ENCODE measurements at regions of chr15 and their contacts with region 1.

Region 1: DNA sequence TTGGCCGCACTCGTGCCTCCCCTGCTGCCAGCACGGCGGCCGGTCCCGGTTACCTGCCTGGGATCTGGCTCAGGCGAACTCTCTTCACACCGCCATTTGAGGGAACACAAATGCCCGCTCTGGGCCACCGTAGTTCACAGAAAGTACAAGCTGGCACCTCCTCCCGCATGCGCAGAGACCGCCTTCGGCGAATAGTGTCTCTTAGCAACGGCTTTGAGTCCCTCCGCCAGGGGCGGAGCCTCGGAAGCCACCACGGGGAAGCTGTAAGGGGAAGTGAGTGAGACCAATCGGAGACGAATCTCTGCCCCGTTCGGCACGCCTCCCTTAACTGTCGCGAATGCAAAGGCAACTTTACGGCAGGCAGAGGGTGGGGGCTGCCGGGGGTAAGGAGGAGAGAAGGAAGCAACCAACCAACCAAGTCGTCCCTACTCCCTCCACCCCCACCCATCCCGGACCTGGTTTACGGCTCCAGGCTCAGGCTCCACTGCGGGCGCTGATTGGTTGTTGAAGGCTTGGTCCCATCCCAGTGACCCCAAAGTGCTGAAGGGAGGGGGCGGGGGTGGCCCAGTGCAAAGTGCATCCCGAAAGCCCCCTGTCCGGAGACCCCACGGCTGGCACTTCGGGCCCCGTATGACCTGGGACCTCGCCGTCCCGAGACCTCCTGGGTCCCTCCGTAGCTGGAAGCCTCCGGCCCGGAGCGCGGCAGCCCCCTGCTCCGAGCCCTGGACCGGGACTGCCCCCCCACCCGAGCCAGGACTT is at the starts of genes ASB7 and LINS1:
- DNase-seq: peak; percentile 100
- H3K4me3 Mint-ChIP-seq: no peak within 1 kb of the TSS
- H3K27ac Mint-ChIP-seq: no peak within 1 kb of the TSS
- H3K4me1 Mint-ChIP-seq: peaks cover 22% of the 10 kb centered on the region
- H3K27me3 Mint-ChIP-seq: no peaks in the 10 kb centered on the region
- CTCF ChIP-seq: no peak
- total RNA-seq, gene ASB7: 14.3 and 19.2 TPM in 2 replicates
- total RNA-seq, gene LINS1: 13.9 and 15.1 TPM in 2 replicates

Region 2: DNA sequence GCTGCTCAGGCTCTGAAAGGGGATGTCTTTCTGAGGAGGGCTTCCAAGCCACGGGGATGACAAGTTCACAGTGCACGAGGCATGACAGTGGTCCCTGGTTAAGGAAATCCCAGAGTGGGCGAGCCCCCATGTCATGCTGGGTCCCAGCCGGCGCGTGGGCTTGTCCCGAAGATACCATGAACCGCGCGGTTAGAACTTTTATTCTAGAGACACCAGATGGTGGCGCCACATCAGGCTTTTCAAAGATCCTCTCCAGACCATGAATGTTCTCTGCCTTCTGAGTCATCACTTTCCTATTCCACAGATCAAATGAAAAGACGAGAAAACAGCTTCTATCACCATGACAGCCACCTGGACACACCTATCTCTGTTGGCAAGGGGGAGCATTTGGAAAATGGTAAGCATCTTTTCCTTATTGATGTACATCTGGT is 641.2 kb before region 1 on chr15:
- CTCF ChIA-PET with region 1: no interaction called
- POLR2A ChIA-PET with region 1: no interaction called
- intact Hi-C with region 1: loop called (anchors 10 kb)
- DNase-seq: peak; percentile 53
- H3K4me3 Mint-ChIP-seq: no peak overlapping the region
- H3K27ac Mint-ChIP-seq: no peak overlapping the region
- H3K4me1 Mint-ChIP-seq: peaks cover 15% of the 10 kb centered on the region
- H3K27me3 Mint-ChIP-seq: no peaks in the 10 kb centered on the region
- CTCF ChIP-seq: no peak

Region 3: GRCh38 chr15:100349696-100350433 is 252.4 kb before region 1 on chr15:
- CTCF ChIA-PET with region 1: interaction called, 3 read pairs
- POLR2A ChIA-PET with region 1: interaction called, 32 read pairs
- intact Hi-C with region 1: loop called (anchors 1 kb)
- DNase-seq: peak; percentile 93
- H3K4me3 Mint-ChIP-seq: peak overlapping the region; percentile 86
- H3K27ac Mint-ChIP-seq: peak overlapping the region; percentile 94
- H3K4me1 Mint-ChIP-seq: peaks cover 12% of the 10 kb centered on the region
- H3K27me3 Mint-ChIP-seq: no peaks in the 10 kb centered on the region
- CTCF ChIP-seq: peak; percentile 78

Region 4: GRCh38 chr15:100633763-100634075 is 31.5 kb after region 1 on chr15:
- CTCF ChIA-PET with region 1: no interaction called
- POLR2A ChIA-PET with region 1: no interaction called
- intact Hi-C with region 1: no loop called
- DNase-seq: no peak
- H3K4me3 Mint-ChIP-seq: no peak overlapping the region
- H3K27ac Mint-ChIP-seq: peak overlapping the region; percentile 71
- H3K4me1 Mint-ChIP-seq: peaks cover 18% of the 10 kb centered on the region
- H3K27me3 Mint-ChIP-seq: no peaks in the 10 kb centered on the region
- CTCF ChIP-seq: no peak

Region 5: DNA sequence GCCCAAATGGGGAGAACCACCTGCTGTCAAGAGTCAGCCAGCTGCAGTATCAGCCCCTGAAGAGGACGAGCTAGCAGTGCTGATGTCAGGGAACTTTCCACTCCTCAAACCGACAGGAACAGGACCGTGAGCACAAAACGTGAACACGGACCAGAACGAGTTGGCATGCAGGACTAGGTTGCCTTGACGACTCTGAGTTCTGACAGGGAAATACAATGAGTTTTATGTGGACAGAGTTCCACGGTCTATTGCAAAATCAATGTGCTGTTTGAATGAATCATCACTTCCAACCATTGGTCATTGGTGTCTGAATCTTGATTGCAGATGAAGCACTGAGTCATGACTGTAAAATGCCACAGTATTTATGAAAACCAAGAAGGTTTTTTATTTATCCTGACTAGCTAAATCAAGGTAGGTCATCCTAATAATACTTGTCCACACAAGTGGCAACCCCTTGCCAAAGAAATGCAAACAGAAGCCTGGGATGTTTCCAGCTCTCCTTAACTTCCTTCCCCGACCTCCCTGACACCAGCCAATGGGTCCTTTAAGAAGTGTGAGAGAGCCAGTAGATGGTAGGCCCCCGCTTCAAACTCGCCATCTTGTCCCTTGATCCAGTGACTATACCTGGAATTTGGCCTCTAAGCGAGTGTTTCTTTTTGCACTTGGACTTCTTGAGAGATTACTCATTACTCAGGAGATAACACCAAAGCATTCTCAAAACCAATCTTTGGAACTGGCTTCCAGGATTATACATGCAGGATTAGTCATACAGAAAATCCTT is 119.7 kb after region 1 on chr15:
- CTCF ChIA-PET with region 1: no interaction called
- POLR2A ChIA-PET with region 1: interaction called, 4 read pairs
- intact Hi-C with region 1: loop called (anchors 5 kb)
- DNase-seq: peak; percentile 99
- H3K4me3 Mint-ChIP-seq: peak overlapping the region; percentile 66
- H3K27ac Mint-ChIP-seq: peak overlapping the region; percentile 100
- H3K4me1 Mint-ChIP-seq: peaks cover 38% of the 10 kb centered on the region
- H3K27me3 Mint-ChIP-seq: no peaks in the 10 kb centered on the region
- CTCF ChIP-seq: no peak

Region 6: DNA sequence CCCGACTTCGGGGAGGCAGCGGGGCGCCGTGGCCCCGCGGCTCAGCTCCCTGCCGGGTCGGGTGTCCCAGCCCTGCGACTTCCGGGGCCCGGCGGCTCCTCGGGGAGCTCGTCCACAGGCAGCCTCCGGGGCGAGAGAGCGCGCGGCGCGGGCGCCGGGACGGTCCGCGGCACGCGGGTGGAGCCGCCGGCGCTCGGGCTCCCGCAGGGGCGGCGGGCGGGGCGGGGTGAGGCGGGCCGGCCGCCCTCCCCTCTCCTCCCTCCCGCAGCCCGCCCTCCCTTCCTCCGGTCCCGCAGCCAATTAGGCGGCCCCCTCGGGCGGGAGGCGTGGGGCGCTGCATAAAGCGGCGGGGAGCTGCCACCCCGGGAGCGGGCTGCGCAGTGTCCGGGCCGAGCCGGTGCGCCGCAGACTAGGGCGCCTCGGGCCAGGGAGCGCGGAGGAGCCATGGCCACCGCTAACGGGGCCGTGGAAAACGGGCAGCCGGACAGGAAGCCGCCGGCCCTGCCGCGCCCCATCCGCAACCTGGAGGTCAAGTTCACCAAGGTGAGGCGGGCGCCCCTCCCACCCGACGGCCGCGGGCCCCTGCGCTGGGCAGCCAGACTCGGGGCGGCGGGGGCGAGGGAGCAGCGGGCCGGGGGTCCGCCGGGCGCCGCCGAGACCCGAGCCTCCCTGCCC is 277.4 kb after region 1 on chr15 and contains the start of gene ALDH1A3:
- CTCF ChIA-PET with region 1: interaction called, 3 read pairs
- POLR2A ChIA-PET with region 1: interaction called, 11 read pairs
- intact Hi-C with region 1: no loop called
- DNase-seq: peak; percentile 81
- H3K4me3 Mint-ChIP-seq: peak within 1 kb of the TSS; percentile 63
- H3K27ac Mint-ChIP-seq: no peak within 1 kb of the TSS
- H3K4me1 Mint-ChIP-seq: no peaks in the 10 kb centered on the region
- H3K27me3 Mint-ChIP-seq: no peaks in the 10 kb centered on the region
- CTCF ChIP-seq: no peak
- total RNA-seq, gene ALDH1A3: 3.4 and 4.3 TPM in 2 replicates

Measured in MCF 10A (cell line).